PC-9 (cell line): ENCODE measurements at regions of chr2 and their contacts with region 1.

Region 1: GRCh38 chr2:65527451-65528240 is 95.2 kb upstream of the SPRED2 start:
- DNase-seq: no peak
- H3K4me3 ChIP-seq: no peak overlapping the region
- H3K27ac ChIP-seq: no peak overlapping the region
- H3K4me1 ChIP-seq: peaks cover 12% of the 10 kb centered on the region
- H3K27me3 ChIP-seq: no peaks in the 10 kb centered on the region
- CTCF ChIP-seq: no peak

Region 2: GRCh38 chr2:65142515-65142914 is 385.1 kb before region 1 on chr2:
- CTCF ChIA-PET with region 1: no interaction called
- POLR2A ChIA-PET with region 1: interaction called, 14 read pairs
- intact Hi-C with region 1: no loop called
- DNase-seq: no peak
- H3K4me3 ChIP-seq: no peak overlapping the region
- H3K27ac ChIP-seq: no peak overlapping the region
- H3K4me1 ChIP-seq: no peaks in the 10 kb centered on the region
- H3K27me3 ChIP-seq: no peaks in the 10 kb centered on the region
- CTCF ChIP-seq: peak; percentile 45; the same call in 1 of the 2 replicates

Region 3: GRCh38 chr2:65164426-65164891 is 363.2 kb before region 1 on chr2:
- CTCF ChIA-PET with region 1: no interaction called
- POLR2A ChIA-PET with region 1: no interaction called
- intact Hi-C with region 1: no loop called
- DNase-seq: no peak
- H3K4me3 ChIP-seq: no peak overlapping the region
- H3K27ac ChIP-seq: no peak overlapping the region
- H3K4me1 ChIP-seq: peaks cover 10% of the 10 kb centered on the region
- H3K27me3 ChIP-seq: no peaks in the 10 kb centered on the region
- CTCF ChIP-seq: no peak

Region 4: DNA sequence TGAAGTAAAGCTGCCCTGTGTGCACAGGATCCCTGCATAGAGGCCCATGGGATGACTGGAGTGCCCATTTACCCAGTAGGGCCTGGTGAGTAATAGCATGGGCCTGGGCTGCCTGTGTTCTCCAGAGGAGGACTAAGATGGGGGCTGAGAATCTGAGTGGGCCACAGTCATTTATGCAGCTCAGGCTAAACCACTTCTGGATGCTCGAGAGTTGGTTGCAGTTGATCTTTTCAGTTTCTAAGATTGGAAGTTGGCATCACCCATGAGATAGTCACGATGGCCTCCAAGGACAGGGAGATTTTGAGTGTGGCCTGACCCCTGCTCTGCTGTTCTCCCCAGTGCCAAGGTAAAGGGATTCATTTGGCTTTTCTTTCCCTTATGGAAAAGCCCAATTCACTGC is 83.8 kb after region 1 on chr2:
- CTCF ChIA-PET with region 1: no interaction called
- POLR2A ChIA-PET with region 1: no interaction called
- intact Hi-C with region 1: no loop called
- DNase-seq: no peak
- H3K4me3 ChIP-seq: no peak overlapping the region
- H3K27ac ChIP-seq: no peak overlapping the region
- H3K4me1 ChIP-seq: peaks cover 27% of the 10 kb centered on the region
- H3K27me3 ChIP-seq: no peaks in the 10 kb centered on the region
- CTCF ChIP-seq: no peak